ENCODE measurements at regions of chr2 and their contacts with region 1.

Region 1: DNA sequence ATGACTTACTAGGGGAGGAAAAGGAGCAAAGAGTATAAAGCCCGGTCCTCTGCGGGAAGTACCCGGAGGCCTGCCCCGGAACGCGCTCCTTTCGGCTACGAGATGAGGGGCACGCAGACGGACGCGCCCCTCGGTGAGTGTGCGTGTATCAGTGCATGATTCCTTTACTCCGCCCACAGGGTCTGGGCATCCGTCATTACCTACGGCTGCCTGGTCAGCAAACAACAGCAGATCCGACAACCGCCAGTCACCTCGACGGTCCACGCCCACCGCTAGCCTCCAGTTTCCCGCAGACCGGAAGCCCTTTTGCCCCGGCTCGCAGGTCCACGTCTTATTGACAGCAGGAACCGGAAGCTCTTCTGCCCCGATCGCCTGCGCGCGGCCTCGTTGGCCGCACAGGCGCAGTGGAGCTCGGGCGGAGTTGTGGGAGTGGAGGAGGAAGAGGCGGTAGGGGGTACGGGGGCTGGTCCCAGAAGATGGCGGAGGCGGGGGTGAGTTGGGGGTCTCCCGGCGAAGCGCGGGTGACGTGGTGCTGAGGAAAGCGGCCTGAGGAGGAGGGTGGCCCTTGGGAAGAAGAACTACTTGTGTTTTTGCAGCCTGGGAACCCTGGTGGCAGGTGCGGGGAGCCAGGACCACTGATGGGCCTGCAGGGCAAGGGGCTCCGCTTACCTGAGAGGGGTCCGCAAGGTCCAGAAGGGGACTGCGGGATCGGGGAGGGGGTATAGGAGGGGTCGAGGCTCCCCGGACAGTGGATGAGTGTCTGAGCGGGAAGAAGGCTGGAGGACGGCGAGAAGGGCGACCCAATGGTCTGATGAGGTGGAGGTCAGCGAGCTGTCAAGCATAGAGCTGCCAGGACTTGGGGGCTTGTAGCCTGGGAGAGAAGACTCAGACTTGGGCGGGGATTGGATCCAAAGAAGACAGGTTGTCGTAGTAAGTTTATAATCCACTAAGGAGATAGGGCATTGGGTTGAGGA is at the start of gene INSIG2:
- DNase-seq: peak; percentile 91
- H3K4me3 Mint-ChIP-seq: peak within 1 kb of the TSS; percentile 93
- H3K27ac Mint-ChIP-seq: peak within 1 kb of the TSS; percentile 92
- H3K4me1 Mint-ChIP-seq: peaks cover 17% of the 10 kb centered on the region
- H3K27me3 Mint-ChIP-seq: peaks cover 12% of the 10 kb centered on the region
- total RNA-seq, gene INSIG2: 48.4 and 51.6 TPM in 2 replicates

Region 2: DNA sequence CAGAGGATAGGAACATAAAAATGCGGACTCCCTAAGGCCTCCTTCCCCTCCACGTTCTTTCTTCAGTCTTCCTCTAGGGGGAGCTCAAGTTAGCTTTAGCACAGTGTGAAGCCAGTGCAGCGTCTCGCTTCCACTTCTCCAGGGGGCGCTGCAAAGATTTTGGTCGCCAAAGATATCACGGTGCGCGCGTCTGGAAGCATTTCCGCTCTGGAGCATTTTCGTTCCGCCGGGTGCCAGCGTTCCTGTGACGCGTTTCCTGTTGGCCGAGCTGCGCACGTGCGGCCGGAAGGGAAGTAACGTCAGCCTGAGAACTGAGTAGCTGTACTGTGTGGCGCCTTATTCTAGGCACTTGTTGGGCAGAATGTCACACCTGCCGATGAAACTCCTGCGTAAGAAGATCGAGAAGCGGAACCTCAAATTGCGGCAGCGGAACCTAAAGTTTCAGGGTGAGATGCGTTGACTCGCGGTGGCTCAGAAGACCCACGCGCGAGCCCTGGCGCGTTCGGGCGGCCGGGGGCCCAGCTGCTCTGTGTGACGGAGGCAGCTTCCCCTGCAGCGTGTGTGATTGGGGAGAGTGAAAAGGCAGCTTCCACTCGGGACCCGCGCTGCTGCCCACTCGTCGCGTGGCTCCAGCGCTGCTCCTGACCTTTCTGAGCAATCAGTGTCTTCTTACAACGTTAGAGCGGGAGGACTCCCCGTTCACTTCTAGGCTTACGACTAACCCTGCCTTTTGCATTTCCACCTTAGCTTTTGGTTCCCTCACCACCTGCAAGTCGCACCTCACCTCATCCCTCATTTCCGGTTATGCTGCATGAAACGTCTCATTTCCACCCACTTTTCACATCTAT is 273.7 kb before region 1 on chr2 and contains the start of gene DDX18:
- intact Hi-C with region 1: loop called (anchors 1 kb)
- DNase-seq: peak; percentile 96
- H3K4me3 Mint-ChIP-seq: peak within 1 kb of the TSS; percentile 90
- H3K27ac Mint-ChIP-seq: peak within 1 kb of the TSS; percentile 92
- H3K4me1 Mint-ChIP-seq: peaks cover 21% of the 10 kb centered on the region
- H3K27me3 Mint-ChIP-seq: no peaks in the 10 kb centered on the region
- total RNA-seq, gene DDX18: 128 and 131 TPM in 2 replicates

Region 3: GRCh38 chr2:117933884-117934354 is 154.4 kb before region 1 on chr2:
- intact Hi-C with region 1: no loop called
- DNase-seq: no peak
- H3K4me3 Mint-ChIP-seq: no peak overlapping the region
- H3K27ac Mint-ChIP-seq: no peak overlapping the region
- H3K4me1 Mint-ChIP-seq: no peaks in the 10 kb centered on the region
- H3K27me3 Mint-ChIP-seq: no peaks in the 10 kb centered on the region

Region 4: DNA sequence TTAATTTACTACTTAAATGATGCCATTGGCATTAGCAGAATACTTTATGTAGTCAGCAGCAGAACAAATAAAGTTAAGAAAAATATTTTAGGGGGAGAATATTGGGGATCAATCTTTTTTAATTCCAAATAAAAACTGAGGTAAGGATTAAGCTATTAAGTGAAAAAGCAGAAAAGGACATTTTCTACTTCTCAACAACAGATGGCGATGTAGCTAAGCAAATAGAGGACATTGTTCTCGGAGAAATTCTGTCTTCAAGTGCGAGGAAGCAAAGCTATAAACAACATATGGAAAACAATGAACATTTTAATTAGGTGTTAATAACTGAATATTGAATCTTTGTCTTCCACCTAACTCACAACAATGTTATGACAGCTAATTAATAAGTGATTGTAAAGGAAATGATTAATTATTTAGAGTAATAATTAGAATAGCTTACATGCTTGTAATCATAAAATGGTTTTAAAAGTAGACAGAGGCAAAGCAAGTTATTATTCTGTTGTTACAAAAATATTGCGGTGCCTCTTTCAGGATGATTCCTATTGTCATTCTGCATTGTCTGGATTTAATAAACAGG is 41.6 kb before region 1 on chr2:
- intact Hi-C with region 1: loop called (anchors 2 kb)
- DNase-seq: no peak
- H3K4me3 Mint-ChIP-seq: no peak overlapping the region
- H3K27ac Mint-ChIP-seq: no peak overlapping the region
- H3K4me1 Mint-ChIP-seq: peaks cover 9% of the 10 kb centered on the region
- H3K27me3 Mint-ChIP-seq: peaks cover 42% of the 10 kb centered on the region

Region 5: DNA sequence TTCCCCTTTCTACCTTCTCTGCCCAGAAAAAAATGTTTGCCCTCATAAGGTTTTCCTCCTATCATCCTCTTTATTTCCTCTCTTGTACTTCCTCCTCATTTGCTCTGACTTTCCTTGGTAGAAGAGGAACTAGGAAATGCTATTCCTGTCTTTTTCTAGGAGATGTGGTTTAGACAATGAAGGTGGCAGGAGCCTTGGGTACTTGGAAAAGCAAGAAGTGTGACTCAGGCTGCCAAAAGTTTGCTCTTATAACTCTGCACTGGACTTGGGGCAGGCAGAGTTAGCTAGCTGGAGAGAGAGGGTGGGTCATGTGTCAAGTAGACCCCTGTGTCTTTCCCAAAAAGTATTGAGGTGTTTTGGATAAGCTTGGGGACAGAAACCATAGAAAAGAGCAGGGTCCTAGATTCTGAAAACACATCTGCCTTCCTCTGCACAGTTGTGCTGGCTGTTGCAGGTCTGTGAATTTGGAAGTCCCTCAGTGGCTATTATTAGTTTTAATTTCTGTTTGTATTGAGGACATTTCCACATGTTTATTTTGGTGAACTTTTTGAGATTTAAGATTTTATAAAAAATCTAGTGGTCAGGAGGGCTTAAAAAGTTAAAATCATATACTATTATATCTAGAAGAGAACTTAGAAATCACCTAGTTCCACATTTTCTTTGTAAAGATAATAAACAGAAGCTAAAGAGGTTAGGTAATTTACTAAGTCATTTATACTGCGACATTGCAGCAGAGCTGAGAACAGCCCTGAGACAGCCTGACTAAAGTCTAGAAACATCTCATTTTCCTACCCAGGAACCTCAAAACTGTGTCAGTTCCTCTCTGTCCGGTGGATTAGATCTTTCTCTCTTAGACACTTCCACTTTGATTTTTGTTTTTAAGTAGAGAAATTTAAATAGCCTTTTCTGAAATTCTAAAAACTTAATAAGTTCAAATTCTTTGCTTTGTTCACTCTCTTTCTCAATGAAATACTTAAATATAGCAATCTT is 15.9 kb after region 1 on chr2:
- intact Hi-C with region 1: loop called (anchors 2 kb)
- DNase-seq: no peak
- H3K4me3 Mint-ChIP-seq: no peak overlapping the region
- H3K27ac Mint-ChIP-seq: no peak overlapping the region
- H3K4me1 Mint-ChIP-seq: peaks cover 25% of the 10 kb centered on the region
- H3K27me3 Mint-ChIP-seq: no peaks in the 10 kb centered on the region

Region 6: GRCh38 chr2:118177884-118178283 is 89.5 kb after region 1 on chr2:
- intact Hi-C with region 1: loop called (anchors 1 kb)
- DNase-seq: no peak
- H3K4me3 Mint-ChIP-seq: no peak overlapping the region
- H3K27ac Mint-ChIP-seq: peak overlapping the region; percentile 96
- H3K4me1 Mint-ChIP-seq: peaks cover 34% of the 10 kb centered on the region
- H3K27me3 Mint-ChIP-seq: no peaks in the 10 kb centered on the region

Measured in activated T-helper 2 cell treated with anti-CD3 and anti-CD28 coated beads, Interferon-gamma antibody, Interleukin-2, Interleukin-4, amounts not matched to agents 10 μg/mL and 5 μg/mL and 100 μg/mL, durations not matched to agents 14 hours and 24 hours and 36 hours (primary cell).